Activated B cell treated with CpG ODN at 0.5 μM for 24 hours (primary cell): ENCODE measurements at regions of chr1 and their contacts with region 1.

Region 1: GRCh38 chr1:200437556-200438203 is 27.8 kb upstream of the ZNF281 start:
- DNase-seq: no peak
- ATAC-seq: peak; percentile 37
- H3K4me3 Mint-ChIP-seq: peak overlapping the region; percentile 73
- H3K27ac Mint-ChIP-seq: peak overlapping the region; percentile 16
- H3K4me1 Mint-ChIP-seq: peaks cover 7% of the 10 kb centered on the region
- H3K27me3 Mint-ChIP-seq: no peaks in the 10 kb centered on the region
- CTCF ChIP-seq: no peak

Region 2: GRCh38 chr1:200381256-200381984 is 56.3 kb before region 1 on chr1:
- CTCF ChIA-PET with region 1: no interaction called
- POLR2A ChIA-PET with region 1: interaction called, 11 read pairs
- intact Hi-C with region 1: no loop called
- DNase-seq: no peak
- ATAC-seq: no peak
- H3K4me3 Mint-ChIP-seq: no peak overlapping the region
- H3K27ac Mint-ChIP-seq: no peak overlapping the region
- H3K4me1 Mint-ChIP-seq: peaks cover 50% of the 10 kb centered on the region
- H3K27me3 Mint-ChIP-seq: no peaks in the 10 kb centered on the region
- CTCF ChIP-seq: no peak

Region 3: GRCh38 chr1:200493344-200493743 is 55.7 kb after region 1 on chr1:
- CTCF ChIA-PET with region 1: no interaction called
- POLR2A ChIA-PET with region 1: no interaction called
- intact Hi-C with region 1: no loop called
- DNase-seq: no peak
- ATAC-seq: no peak
- H3K4me3 Mint-ChIP-seq: no peak overlapping the region
- H3K27ac Mint-ChIP-seq: no peak overlapping the region
- H3K4me1 Mint-ChIP-seq: peaks cover 3% of the 10 kb centered on the region
- H3K27me3 Mint-ChIP-seq: peaks cover 11% of the 10 kb centered on the region
- CTCF ChIP-seq: no peak